HAP-1 (cell line): ENCODE measurements at regions of chr2 and their contacts with region 1.

Region 1: DNA sequence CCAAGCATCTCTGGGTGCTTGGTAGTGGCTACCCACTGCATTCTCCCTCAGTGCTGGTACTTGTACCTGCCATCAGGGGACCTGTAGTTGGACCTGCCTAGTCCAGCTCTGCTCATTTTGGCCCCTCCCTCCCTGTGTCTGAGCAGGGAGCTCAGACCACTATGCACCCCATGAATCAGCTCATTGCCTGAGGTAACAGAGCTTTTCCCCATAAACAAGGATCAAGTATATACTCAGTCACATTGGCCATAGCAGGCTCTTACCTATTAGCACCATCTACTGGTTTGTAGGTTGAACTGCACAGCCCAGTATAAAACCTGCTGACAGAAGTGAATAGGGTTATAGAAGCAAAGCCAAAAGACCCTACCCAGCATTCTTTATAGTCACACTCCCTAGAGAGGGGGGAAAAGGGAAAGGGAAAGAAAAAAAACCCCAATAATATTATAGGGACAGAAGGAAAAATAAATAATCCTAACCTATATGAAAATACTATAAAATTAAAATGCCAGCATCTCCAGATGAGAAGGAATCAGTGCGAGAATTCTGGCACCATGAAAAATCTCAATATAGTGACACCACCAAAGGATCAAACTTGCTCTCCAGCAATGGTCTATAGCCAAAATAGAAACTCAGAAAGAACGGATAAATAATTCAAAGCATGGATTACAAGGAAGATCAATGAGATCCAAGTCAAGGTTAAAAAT is 6.9 kb upstream of the FLACC1 start:
- DNase-seq: peak; percentile 35 to 44
- H3K4me3 ChIP-seq: no peak overlapping the region
- H3K4me1 ChIP-seq: no peaks in the 10 kb centered on the region
- H3K27me3 ChIP-seq: no peaks in the 10 kb centered on the region

Region 2: DNA sequence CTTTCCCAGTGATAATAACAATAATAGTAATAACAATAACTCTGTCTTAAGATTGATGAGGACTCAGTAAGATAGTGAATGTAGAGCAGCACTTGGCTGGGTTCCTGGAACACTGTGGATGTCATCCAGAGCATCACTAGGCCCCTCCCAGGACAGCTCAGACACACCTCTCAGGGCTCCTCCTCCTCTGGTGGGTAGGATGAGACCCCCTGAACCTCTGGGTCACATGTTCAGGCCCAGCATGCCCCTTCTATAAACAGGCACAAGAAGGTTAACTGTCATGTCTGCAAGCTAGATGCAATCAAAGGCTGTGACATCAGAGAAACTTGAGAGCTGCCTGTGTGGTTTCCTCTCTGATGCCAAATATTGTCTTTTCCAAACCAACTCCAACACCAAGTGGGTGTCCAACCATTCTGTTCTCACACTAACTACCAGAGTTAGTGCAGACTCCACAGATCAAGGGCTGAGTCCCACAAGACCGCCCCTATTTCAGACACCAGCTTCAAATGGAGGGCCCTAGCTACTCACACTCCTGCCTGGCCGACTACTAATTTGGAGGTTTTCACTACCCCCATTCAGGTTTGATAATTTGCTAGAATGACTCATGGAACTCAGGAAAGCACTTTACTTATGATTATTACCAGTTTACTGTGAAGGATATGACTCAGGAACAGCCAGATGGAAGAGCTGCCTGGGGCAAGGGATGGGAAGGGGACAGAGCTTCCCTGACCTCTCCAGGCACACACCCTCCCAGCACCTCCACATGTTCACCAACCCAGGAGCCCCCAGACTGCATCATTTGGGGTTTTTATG is 598.7 kb before region 1 on chr2:
- in situ Hi-C with region 1: no loop called
- DNase-seq: no peak
- H3K4me3 ChIP-seq: no peak overlapping the region
- H3K4me1 ChIP-seq: no peaks in the 10 kb centered on the region
- H3K27me3 ChIP-seq: no peaks in the 10 kb centered on the region

Region 3: DNA sequence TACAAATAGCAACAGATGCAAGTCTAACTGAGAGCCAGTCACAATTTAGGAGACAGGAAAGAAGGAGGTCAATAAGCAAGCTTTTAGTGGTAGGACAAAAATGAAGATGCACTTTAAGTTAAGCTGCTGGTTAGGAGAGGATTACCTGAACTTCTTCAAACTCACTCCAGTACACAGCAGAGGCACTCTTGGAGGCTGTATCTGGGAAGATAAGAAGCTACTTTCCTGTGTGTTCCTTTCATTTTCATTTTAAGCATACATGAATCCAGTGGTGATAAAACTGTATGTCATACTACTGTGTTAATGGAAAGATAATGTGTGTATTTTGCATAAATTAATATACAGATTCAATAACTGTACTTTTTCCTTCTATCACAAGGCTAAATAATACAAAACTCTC is 342.1 kb before region 1 on chr2:
- in situ Hi-C with region 1: no loop called
- DNase-seq: no peak
- H3K4me3 ChIP-seq: no peak overlapping the region
- H3K4me1 ChIP-seq: peaks cover 11% of the 10 kb centered on the region
- H3K27me3 ChIP-seq: no peaks in the 10 kb centered on the region

Region 4: GRCh38 chr2:201242571-201243277 is 121.3 kb before region 1 on chr2:
- in situ Hi-C with region 1: loop called (anchors 10 kb)
- DNase-seq: no peak
- H3K4me3 ChIP-seq: no peak overlapping the region
- H3K4me1 ChIP-seq: no peaks in the 10 kb centered on the region
- H3K27me3 ChIP-seq: no peaks in the 10 kb centered on the region

Region 5: GRCh38 chr2:201780674-201781581 is 416.9 kb after region 1 on chr2 and contains the start of gene ALS2:
- in situ Hi-C with region 1: no loop called
- DNase-seq: peak; percentile 93 to 98
- H3K4me3 ChIP-seq: peak within 1 kb of the TSS; percentile 77
- H3K4me1 ChIP-seq: peaks cover 27% of the 10 kb centered on the region
- H3K27me3 ChIP-seq: no peaks in the 10 kb centered on the region